ENCODE measurements at regions of chr4 and their contacts with region 1.

Region 1: GRCh38 chr4:64539234-64539849 is 130.1 kb upstream of the TECRL start:
- DNase-seq: peak; percentile 13 to 34
- ATAC-seq: peak; percentile 80 to 81
- H3K4me3 ChIP-seq: no peak overlapping the region
- H3K27ac ChIP-seq: no peak overlapping the region
- H3K4me1 ChIP-seq: no peaks in the 10 kb centered on the region
- H3K27me3 ChIP-seq: no peaks in the 10 kb centered on the region
- CTCF ChIP-seq: peak; percentile 50 to 79 (median 71)
- POLR2A ChIP-seq: no peak

Region 2: DNA sequence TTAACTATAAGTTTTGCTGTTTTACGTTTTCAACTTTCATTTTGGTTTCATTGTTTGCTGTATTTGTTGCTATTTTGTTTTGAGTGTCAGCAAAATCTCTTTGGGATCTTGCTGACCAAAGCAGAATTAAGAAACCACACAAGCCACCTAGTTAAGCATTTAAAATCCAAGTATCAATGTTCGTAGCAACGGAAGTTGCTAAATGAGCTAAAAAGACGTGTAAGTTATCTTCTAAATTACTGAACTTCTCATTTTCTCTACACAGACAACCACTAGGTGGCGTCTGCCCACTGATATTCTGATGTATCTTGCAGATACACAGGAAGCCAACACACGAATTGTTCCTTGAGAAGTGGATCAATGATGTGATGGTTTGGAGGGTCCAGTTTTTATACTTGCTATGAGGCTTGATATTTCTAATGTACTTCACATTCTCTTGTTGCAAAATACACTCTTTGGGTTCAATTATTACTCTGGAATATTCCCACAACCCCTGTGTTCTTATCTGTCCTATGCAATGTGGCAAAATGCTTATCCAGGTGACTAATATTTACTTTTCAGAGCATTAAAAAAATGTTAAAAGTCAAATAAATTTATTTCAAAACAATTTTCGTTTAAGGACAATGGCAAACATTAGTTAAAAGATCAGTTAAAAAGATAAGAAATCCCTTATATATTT is 380.6 kb before region 1 on chr4:
- in situ Hi-C with region 1: loop called (anchors 5 to 10 kb)
- intact Hi-C with region 1: loop called (anchors 1 kb)
- DNase-seq: peak in 1 of 2 donors; percentile 12
- ATAC-seq: peak in 1 of 2 donors; percentile 21
- H3K4me3 ChIP-seq: peak overlapping the region in 3 of 4 donors; percentile 30 to 49 (median 42)
- H3K27ac ChIP-seq: no peak overlapping the region
- H3K4me1 ChIP-seq: peaks cover 0 to 3% of the 10 kb centered on the region in 2 donors
- H3K27me3 ChIP-seq: no peaks in the 10 kb centered on the region
- CTCF ChIP-seq: peak; percentile 47 to 72 (median 62)
- POLR2A ChIP-seq: no peak

Region 3: GRCh38 chr4:64271601-64272081 is 267.7 kb before region 1 on chr4:
- in situ Hi-C with region 1: loop called in 1 of 4 experiments (anchors 25 kb)
- intact Hi-C with region 1: no loop called
- DNase-seq: peak in 1 of 2 donors; percentile 51
- ATAC-seq: peak in 1 of 2 donors; percentile 88
- H3K4me3 ChIP-seq: peak overlapping the region; percentile 43 to 54 (median 46)
- H3K27ac ChIP-seq: peak overlapping the region in 3 of 4 donors; percentile 27 to 66 (median 32)
- H3K4me1 ChIP-seq: peaks cover 0 to 2% of the 10 kb centered on the region in 2 donors
- H3K27me3 ChIP-seq: no peaks in the 10 kb centered on the region
- CTCF ChIP-seq: no peak
- POLR2A ChIP-seq: no peak

Region 4: DNA sequence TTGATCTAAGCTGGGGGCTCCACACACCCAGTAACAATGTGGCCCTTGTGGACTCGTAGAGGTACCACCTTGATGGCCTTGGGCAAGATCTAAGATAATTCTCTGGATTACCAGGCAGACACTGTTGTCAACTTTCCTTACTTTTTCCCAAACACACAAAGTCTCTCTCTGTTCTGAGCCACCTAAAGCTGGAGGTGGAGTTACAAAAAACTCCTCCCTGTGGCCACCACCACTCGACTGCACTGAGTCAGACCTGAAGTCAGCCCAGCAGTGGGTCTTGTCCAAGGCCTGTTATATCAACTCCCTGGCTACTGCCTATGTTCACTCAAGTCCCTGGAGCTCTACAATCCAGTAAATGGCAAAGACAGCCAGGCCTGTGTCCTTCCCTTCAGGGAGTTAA is 60.0 kb before region 1 on chr4:
- in situ Hi-C with region 1: loop called in 1 of 4 experiments (anchors 10 kb)
- intact Hi-C with region 1: no loop called
- DNase-seq: no peak
- ATAC-seq: no peak
- H3K4me3 ChIP-seq: no peak overlapping the region
- H3K27ac ChIP-seq: no peak overlapping the region
- H3K4me1 ChIP-seq: no peaks in the 10 kb centered on the region
- H3K27me3 ChIP-seq: no peaks in the 10 kb centered on the region
- CTCF ChIP-seq: no peak
- POLR2A ChIP-seq: no peak